MCF 10A (cell line): ENCODE measurements at regions of chr3 and their contacts with region 1.

Region 1: DNA sequence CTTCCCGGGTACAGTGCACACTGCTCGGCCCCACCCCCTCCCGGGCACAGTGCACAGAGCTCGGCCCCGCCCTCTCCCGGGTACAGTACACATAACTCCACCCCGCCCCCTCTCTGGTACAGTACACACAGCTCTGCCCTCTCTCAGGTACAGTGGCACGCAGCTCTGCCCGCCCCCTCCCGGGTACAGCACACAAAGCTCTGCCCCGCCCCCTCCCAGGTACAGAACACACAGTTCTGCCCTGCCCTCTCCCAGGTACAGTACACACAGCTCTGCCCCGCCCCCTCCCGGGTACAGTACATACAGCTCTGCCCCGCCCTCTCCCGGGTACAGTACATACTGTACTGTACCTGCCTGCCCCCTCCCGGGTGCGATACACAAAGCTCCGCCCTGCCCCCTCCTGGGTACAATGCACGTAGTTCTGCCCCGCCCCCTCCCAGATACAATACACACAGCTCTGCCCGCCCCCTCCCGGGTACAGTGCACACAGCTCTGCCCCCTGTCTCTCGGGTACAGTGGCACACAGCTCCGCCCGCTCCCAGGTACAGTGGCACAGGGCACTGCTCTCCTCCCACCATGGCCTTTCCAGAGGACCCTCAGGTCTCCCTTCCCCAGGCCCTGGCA is 16.4 kb upstream of the PRR20G start:
- DNase-seq: peak; percentile 96
- H3K4me3 Mint-ChIP-seq: peak overlapping the region; percentile 69
- H3K27ac Mint-ChIP-seq: no peak overlapping the region
- H3K4me1 Mint-ChIP-seq: peaks cover 15% of the 10 kb centered on the region
- H3K27me3 Mint-ChIP-seq: no peaks in the 10 kb centered on the region
- CTCF ChIP-seq: peak; percentile 41

Region 2: GRCh38 chr3:126982471-126983175 is 321.6 kb before region 1 on chr3 and contains the start of gene PLXNA1:
- CTCF ChIA-PET with region 1: no interaction called
- POLR2A ChIA-PET with region 1: no interaction called
- intact Hi-C with region 1: loop called (anchors 1 kb)
- DNase-seq: peak; percentile 83
- H3K4me3 Mint-ChIP-seq: peak within 1 kb of the TSS; percentile 69
- H3K27ac Mint-ChIP-seq: no peak within 1 kb of the TSS
- H3K4me1 Mint-ChIP-seq: peaks cover 22% of the 10 kb centered on the region
- H3K27me3 Mint-ChIP-seq: no peaks in the 10 kb centered on the region
- CTCF ChIP-seq: peak; percentile 93
- total RNA-seq, gene PLXNA1: 42.1 and 48.4 TPM in 2 replicates

Region 3: DNA sequence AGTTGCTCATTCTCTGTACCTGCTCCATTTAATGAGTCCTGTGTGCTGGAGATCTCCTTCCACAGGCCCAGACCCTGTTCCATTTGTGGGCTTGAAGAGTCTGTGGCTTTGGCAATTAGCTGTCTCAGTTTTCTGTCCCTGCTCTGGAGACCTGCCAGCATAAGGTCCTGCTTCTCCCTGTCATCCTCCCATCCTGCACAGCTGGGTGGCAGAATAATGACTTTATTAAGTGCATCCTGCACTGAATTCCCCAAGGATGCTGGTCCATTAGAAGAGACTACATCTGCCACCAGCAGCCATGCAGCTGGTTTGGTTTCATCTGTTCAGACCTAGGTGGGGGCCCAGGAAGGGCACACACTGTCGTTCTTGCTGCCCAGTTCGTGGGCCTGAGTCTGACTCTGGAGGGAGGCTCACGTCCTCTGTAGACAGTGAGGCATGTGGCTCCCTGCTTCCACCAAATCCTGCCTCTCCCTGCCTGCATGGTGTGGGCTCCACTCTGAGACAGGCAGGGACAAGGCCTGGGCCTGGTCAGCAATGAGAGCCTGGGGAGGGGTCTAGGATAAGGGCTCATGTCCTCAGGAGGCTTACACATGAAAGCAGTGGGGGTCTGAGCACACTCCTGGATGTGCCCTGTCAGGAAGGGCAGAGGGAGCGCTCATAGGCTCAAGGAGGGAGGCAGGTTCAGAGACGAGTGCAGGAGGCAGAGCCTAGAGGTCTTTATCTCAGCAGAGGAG is 189.7 kb before region 1 on chr3:
- CTCF ChIA-PET with region 1: no interaction called
- POLR2A ChIA-PET with region 1: no interaction called
- intact Hi-C with region 1: no loop called
- DNase-seq: no peak
- H3K4me3 Mint-ChIP-seq: no peak overlapping the region
- H3K27ac Mint-ChIP-seq: no peak overlapping the region
- H3K4me1 Mint-ChIP-seq: no peaks in the 10 kb centered on the region
- H3K27me3 Mint-ChIP-seq: peaks cover 11% of the 10 kb centered on the region
- CTCF ChIP-seq: no peak

Region 4: DNA sequence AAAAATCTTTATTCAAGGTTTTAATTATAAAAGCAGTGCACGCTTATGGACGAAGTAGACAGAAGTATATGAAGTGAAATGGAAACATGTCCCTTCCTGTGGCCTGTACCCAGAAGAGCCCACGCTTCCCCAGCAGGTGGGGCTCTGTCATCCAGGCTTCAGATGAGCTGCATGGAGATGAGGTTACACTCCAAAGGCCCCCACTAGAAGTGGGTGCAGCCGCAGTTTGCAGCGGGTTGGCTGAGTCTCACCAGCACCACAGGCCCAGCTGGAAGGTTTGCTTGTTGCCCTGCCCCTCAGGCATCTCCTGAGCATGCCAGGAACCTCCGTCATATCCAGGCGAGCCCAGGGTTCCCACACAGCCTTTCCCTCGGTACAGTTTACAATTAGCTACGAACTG is 49.5 kb before region 1 on chr3:
- CTCF ChIA-PET with region 1: interaction called, 3 read pairs
- POLR2A ChIA-PET with region 1: no interaction called
- intact Hi-C with region 1: loop called (anchors 10 kb)
- DNase-seq: peak; percentile 74
- H3K4me3 Mint-ChIP-seq: no peak overlapping the region
- H3K27ac Mint-ChIP-seq: no peak overlapping the region
- H3K4me1 Mint-ChIP-seq: peaks cover 11% of the 10 kb centered on the region
- H3K27me3 Mint-ChIP-seq: no peaks in the 10 kb centered on the region
- CTCF ChIP-seq: peak; percentile 58